ENCODE measurements at regions of chr3 and their contacts with region 1.

Region 1: DNA sequence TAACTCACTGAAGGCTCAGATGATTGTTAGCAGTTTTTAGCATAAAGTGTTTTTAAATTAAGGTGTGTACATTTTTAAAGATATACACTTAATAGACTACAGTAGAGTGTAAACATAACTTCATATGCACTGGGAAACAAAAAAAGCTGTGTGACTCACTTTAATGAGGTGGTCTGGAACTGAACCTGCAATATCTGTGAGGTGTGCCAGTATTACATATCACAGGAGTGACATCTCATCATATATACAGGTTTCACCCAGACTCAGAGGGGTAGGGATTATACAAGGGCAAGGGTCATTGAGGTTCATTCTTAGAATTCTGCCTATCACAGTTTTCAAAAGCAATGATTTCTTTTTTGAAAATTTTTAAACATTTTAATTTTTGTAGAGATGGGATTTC is 7.3 kb upstream of the SNRK start:
- DNase-seq: no peak
- H3K4me3 Mint-ChIP-seq: no peak overlapping the region
- H3K27ac Mint-ChIP-seq: no peak overlapping the region
- H3K4me1 Mint-ChIP-seq: peaks cover 13% of the 10 kb centered on the region
- H3K27me3 Mint-ChIP-seq: no peaks in the 10 kb centered on the region

Region 2: GRCh38 chr3:43236008-43236407 is 43.1 kb before region 1 on chr3:
- CTCF ChIA-PET with region 1: interaction called, 3 read pairs
- POLR2A ChIA-PET with region 1: no interaction called
- intact Hi-C with region 1: loop called (anchors 1 kb)
- DNase-seq: no peak
- H3K4me3 Mint-ChIP-seq: no peak overlapping the region
- H3K27ac Mint-ChIP-seq: no peak overlapping the region
- H3K4me1 Mint-ChIP-seq: peaks cover 16% of the 10 kb centered on the region
- H3K27me3 Mint-ChIP-seq: peaks cover 7% of the 10 kb centered on the region